ENCODE measurements at regions of chr11 and their contacts with region 1.

Region 1: DNA sequence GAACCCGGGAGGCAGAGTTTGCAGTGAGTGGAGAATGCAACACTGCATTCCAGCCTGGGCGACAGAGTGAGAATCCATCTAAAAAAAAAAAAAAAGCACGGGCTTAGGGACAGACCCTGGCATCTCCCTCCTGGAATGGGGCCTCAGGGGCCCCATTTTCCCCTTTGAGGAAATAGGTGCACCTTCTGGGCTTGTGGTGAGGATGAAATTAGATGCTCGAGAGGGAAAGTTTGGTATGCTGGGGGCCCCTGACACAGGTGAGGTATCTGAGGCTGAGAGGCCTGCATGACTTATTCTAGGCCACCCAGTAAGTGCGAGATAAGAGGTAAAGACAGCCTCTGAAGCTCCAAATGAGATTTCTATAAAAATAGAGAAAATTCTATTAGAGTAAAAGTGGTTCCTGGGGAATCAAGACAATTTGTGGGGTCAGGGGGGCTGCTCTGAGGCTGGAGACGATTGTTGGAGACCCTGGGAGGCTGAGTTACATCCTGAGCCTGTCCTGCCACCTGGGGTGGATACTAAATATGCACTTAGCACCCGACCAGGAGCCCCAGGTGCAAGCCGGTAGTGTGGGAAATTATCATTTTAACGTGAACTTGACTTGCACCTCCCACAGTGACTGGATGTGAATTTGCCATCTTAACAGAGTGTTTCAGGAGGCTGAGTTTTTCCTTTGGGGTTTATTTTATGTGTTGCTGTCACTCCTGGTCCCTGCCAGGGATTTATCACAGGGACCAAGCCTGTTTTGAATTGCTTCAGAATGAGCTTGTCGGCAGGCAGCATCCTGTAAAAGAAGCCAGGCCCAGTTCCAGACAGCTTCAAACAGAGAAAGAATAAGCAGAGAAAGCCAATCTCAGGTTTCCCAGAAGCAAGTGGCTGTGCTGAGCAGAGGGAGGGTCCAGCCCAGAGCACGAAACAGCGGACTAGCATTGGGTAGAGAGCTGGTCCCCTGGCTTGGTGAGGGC is 48.4 kb upstream of the TSKU start:
- DNase-seq: no peak
- H3K4me3 ChIP-seq: no peak overlapping the region
- H3K27ac ChIP-seq: no peak overlapping the region
- H3K4me1 ChIP-seq: no peaks in the 10 kb centered on the region
- H3K27me3 ChIP-seq: no peaks in the 10 kb centered on the region
- CTCF ChIP-seq: no peak

Region 2: DNA sequence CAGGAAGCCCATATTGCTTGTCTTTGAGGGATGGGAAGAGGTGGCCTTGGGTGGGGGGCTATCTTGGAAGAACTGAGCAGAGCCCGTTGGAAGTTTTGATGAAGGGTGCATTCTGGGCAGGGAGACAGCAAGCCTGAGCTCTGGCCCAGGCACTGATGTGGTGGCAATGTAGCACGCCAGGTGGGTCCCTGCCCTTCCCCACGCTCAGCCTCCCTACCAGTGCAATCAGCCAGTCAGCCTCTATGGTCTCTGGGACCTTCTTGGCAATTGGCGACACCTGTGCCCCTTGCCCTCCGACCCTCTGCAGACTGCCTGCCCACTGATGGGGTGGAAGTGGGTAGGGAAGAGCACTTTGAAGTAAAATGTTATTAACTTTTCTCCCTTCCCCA is 44.5 kb before region 1 on chr11:
- CTCF ChIA-PET with region 1: no interaction called
- dilution Hi-C with region 1: no loop called
- in situ Hi-C with region 1: no loop called
- intact Hi-C with region 1: no loop called
- DNase-seq: no peak
- H3K4me3 ChIP-seq: no peak overlapping the region
- H3K27ac ChIP-seq: no peak overlapping the region
- H3K4me1 ChIP-seq: no peaks in the 10 kb centered on the region
- H3K27me3 ChIP-seq: no peaks in the 10 kb centered on the region
- CTCF ChIP-seq: no peak

Region 3: GRCh38 chr11:76700177-76701100 is 34.3 kb before region 1 on chr11:
- CTCF ChIA-PET with region 1: no interaction called
- dilution Hi-C with region 1: no loop called
- in situ Hi-C with region 1: no loop called
- intact Hi-C with region 1: no loop called
- DNase-seq: peak; percentile 12
- H3K4me3 ChIP-seq: no peak overlapping the region
- H3K27ac ChIP-seq: no peak overlapping the region
- H3K4me1 ChIP-seq: no peaks in the 10 kb centered on the region
- H3K27me3 ChIP-seq: no peaks in the 10 kb centered on the region
- CTCF ChIP-seq: no peak

Region 4: GRCh38 chr11:76782526-76783293 is 48.0 kb after region 1 on chr11:
- CTCF ChIA-PET with region 1: interaction called, 43 read pairs
- dilution Hi-C with region 1: no loop called
- in situ Hi-C with region 1: no loop called
- intact Hi-C with region 1: no loop called
- DNase-seq: peak; percentile 92
- H3K4me3 ChIP-seq: peak overlapping the region; percentile 86 to 98 (median 97)
- H3K27ac ChIP-seq: peak overlapping the region; percentile 89
- H3K4me1 ChIP-seq: peaks cover 42% of the 10 kb centered on the region
- H3K27me3 ChIP-seq: no peaks in the 10 kb centered on the region
- CTCF ChIP-seq: no peak

Region 5: DNA sequence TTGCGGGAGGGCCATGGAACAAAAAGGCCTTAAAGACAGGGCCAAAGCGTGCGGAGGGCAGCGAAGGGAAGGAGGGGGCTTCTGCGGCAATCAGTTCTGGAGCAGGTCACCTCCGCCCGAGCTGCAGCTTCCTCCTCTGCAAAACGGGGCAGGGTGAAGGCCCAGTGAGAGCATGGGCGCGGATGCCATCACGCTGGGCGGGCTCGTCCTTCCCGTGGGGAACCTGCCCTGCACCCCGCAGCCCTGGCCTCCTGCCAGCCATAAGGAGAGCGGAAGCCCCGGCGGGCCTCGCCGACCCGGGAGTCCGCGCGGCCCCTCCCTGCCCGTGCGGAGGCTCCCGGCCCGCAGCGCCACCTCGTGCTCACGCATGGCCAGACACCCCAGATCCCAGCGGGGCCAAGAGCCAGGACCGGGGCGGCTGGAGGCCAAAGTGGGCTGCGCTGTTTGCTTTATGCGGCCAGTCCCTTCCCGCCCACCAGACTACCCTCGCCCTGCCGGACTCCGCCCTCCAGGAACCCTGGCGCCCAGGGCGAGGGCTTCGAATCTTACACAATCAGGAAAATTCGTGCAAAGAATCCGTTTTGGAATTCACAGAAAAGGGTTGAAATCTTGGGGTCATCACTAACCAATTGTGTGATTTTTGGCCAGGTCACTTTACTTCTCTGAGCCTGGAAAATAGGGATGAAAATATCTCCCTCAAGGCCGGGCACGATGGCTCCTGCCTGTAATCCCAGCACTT is 64.5 kb after region 1 on chr11:
- CTCF ChIA-PET with region 1: interaction called, 16 read pairs
- dilution Hi-C with region 1: loop called (anchors 5 kb)
- in situ Hi-C with region 1: loop called (anchors 5 kb)
- intact Hi-C with region 1: loop called (anchors 1 kb)
- DNase-seq: peak; percentile 47
- H3K4me3 ChIP-seq: no peak overlapping the region
- H3K27ac ChIP-seq: no peak overlapping the region
- H3K4me1 ChIP-seq: peaks cover 14% of the 10 kb centered on the region
- H3K27me3 ChIP-seq: no peaks in the 10 kb centered on the region
- CTCF ChIP-seq: peak; percentile 65 to 93

Region 6: DNA sequence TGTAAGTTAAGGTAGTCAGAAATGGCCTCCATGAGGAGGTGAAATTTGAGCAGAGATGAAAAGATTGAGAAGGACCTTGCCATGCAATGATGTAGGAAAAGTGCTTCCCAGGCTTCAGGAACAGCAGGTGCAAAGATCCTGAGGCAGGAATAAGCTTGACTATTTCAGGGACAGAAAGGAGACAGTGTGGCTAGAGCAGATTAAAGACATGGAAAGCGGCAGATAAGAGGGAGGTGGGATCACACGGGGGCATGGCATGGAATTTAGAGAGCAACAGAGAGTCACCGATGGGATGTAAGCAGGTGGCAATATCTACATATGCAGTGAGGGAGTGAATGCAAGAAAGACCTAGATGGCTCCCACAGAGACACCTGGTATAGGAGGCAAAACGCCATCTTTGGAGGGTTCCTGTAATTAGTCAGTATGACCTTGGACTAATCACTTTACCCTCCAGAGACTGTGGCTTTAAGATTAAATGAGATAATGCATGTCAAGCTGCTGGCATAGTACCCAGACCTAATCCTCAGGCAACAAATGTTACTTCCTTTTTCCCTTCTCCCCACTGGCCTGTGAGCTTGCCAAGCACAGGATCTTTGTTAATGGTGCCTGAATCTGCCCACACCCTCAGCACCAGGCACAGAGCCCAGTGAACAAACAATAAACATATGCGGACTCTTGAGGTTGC is 101.3 kb after region 1 on chr11:
- CTCF ChIA-PET with region 1: no interaction called
- dilution Hi-C with region 1: loop called (anchors 5 kb)
- in situ Hi-C with region 1: no loop called
- intact Hi-C with region 1: no loop called
- DNase-seq: no peak
- H3K4me3 ChIP-seq: no peak overlapping the region
- H3K27ac ChIP-seq: no peak overlapping the region
- H3K4me1 ChIP-seq: peaks cover 25% of the 10 kb centered on the region
- H3K27me3 ChIP-seq: no peaks in the 10 kb centered on the region
- CTCF ChIP-seq: no peak

Region 7: DNA sequence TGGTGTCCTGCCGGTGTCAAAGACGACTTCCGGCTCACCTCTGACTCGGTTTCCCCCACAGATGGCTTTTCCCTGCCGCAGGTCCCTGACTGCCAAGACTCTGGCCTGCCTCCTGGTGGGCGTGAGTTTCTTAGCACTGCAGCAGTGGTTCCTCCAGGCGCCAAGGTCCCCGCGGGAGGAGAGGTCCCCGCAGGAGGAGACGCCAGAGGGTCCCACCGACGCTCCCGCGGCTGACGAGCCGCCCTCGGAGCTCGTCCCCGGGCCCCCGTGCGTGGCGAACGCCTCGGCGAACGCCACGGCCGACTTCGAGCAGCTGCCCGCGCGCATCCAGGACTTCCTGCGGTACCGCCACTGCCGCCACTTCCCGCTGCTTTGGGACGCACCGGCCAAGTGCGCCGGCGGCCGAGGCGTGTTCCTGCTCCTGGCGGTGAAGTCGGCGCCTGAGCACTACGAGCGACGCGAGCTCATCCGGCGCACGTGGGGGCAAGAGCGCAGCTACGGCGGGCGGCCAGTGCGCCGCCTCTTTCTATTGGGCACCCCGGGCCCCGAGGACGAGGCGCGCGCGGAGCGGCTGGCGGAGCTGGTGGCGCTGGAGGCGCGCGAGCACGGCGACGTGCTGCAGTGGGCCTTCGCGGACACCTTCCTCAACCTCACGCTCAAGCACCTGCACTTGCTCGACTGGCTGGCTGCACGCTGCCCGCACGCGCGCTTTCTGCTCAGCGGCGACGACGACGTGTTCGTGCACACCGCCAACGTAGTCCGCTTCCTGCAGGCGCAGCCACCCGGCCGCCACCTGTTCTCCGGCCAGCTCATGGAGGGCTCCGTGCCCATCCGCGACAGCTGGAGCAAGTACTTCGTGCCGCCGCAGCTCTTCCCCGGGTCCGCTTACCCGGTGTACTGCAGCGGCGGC is 305.0 kb after region 1 on chr11:
- CTCF ChIA-PET with region 1: no interaction called
- dilution Hi-C with region 1: no loop called
- in situ Hi-C with region 1: loop called (anchors 10 to 25 kb)
- intact Hi-C with region 1: no loop called
- DNase-seq: peak; percentile 41
- H3K4me3 ChIP-seq: peak overlapping the region in 2 of 3 experiments; percentile 17 to 34
- H3K27ac ChIP-seq: no peak overlapping the region
- H3K4me1 ChIP-seq: peaks cover 13% of the 10 kb centered on the region
- H3K27me3 ChIP-seq: no peaks in the 10 kb centered on the region
- CTCF ChIP-seq: peak; percentile 13 to 58

Region 8: GRCh38 chr11:77101052-77101537 is 366.4 kb after region 1 on chr11:
- CTCF ChIA-PET with region 1: no interaction called
- dilution Hi-C with region 1: no loop called
- in situ Hi-C with region 1: no loop called
- intact Hi-C with region 1: loop called (anchors 10 kb)
- DNase-seq: peak; percentile 23
- H3K4me3 ChIP-seq: no peak overlapping the region
- H3K27ac ChIP-seq: no peak overlapping the region
- H3K4me1 ChIP-seq: no peaks in the 10 kb centered on the region
- H3K27me3 ChIP-seq: no peaks in the 10 kb centered on the region
- CTCF ChIP-seq: peak; percentile 57 to 58